Vagina (tissue), 2 donors: ENCODE measurements at regions of chr5 and their contacts with region 1.

Region 1: DNA sequence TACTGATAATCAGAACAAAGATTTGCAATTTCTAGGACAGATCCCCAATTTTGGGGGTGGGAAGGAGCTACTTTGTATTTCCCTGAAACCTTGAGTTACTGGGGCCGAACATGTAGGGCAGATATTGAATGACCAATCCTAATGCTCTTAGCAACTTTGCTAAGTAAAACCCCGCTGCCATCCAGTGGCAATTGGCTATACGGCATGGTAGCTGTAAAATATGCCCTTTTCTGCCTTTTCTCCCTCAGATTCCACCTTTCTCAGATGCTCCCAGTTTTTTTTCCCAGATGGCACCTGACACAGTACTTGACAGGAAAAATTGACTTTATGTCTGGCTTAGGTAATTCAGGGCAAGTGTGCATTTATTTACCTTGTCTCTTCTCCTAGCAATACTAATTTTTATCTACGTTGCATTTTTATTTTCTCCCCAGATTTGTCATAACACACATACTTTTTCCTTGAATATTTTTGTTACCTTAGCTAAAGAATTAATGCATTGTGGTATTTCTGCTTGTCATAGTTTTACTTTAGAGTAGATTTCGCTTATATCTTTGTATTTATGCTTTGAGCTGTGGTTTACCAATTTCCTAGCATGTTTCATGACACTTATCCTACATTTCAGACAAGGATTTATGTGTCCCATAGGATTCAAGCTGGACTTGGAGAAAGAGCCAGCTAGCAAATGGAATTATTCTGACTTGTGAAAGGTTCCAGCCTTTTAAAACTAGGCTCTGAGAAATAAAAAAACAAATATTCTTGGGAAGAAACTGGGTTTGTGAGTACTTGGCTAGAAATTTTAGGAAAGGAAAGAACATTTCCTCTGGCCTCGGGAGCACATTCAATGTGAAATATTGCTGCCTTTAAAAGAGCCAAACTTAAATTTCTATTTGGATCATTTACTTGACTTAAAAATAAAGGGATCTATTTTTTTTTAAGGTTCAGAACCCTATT is 37.4 kb downstream of the PIK3R1 start:
- DNase-seq: no peak
- H3K4me3 ChIP-seq: peak overlapping the region; percentile 1 to 9
- H3K27ac ChIP-seq: peak overlapping the region; percentile 72
- H3K4me1 ChIP-seq: peaks cover 99% of the 10 kb centered on the region
- H3K27me3 ChIP-seq: no peaks in the 10 kb centered on the region
- CTCF ChIP-seq: peak in 2 of 3 experiments; percentile 39 to 64
- POLR2A ChIP-seq: no peak

Region 2: DNA sequence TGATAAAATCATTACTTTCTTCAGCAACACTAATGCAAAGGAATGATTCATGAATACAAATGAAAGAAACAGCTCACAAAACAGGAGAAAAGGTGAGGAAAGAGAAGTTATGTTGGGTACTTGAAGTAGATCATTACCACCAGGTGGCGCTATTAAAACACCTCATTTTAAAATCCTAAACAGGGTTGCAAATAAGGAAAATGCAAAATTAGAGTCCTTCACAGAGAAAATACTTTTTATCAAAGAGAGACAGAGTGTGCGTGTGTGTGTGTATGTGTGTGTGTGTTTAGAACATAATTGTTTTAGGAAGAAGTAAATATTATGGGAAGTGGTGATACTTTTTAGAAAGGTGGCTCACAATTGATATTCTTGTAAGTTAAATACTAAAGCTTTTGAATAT is 1006.8 kb before region 1 on chr5:
- intact Hi-C with region 1: loop called (anchors 10 kb)
- DNase-seq: no peak
- H3K4me3 ChIP-seq: no peak overlapping the region
- H3K27ac ChIP-seq: peak overlapping the region; percentile 48
- H3K4me1 ChIP-seq: peaks cover 61% of the 10 kb centered on the region
- H3K27me3 ChIP-seq: no peaks in the 10 kb centered on the region
- CTCF ChIP-seq: peak; percentile 38 to 89 (median 78)
- POLR2A ChIP-seq: no peak

Region 3: GRCh38 chr5:67648201-67648671 is 604.7 kb before region 1 on chr5:
- intact Hi-C with region 1: loop called (anchors 10 kb)
- DNase-seq: peak in 1 of 2 donors; percentile 94
- H3K4me3 ChIP-seq: no peak overlapping the region
- H3K27ac ChIP-seq: peak overlapping the region; percentile 48
- H3K4me1 ChIP-seq: peaks cover 28% of the 10 kb centered on the region
- H3K27me3 ChIP-seq: no peaks in the 10 kb centered on the region
- CTCF ChIP-seq: no peak
- POLR2A ChIP-seq: no peak

Region 4: GRCh38 chr5:68215208-68215897 is 37.6 kb before region 1 on chr5 and contains the start of gene PIK3R1:
- intact Hi-C with region 1: loop called (anchors 5 kb)
- DNase-seq: peak in 1 of 2 donors; percentile 97
- H3K4me3 ChIP-seq: peak within 1 kb of the TSS; percentile 71 to 98
- H3K27ac ChIP-seq: peak within 1 kb of the TSS; percentile 85
- H3K4me1 ChIP-seq: peaks cover 30% of the 10 kb centered on the region
- H3K27me3 ChIP-seq: no peaks in the 10 kb centered on the region
- CTCF ChIP-seq: peak in 1 of 3 experiments; percentile 38
- POLR2A ChIP-seq: peak; percentile 89 to 92
- total RNA-seq, gene PIK3R1: 134 TPM

Region 5: GRCh38 chr5:68303038-68303738 is 50.2 kb after region 1 on chr5:
- intact Hi-C with region 1: no loop called
- DNase-seq: peak in 1 of 2 donors; percentile 29
- H3K4me3 ChIP-seq: no peak overlapping the region
- H3K27ac ChIP-seq: no peak overlapping the region
- H3K4me1 ChIP-seq: no peaks in the 10 kb centered on the region
- H3K27me3 ChIP-seq: no peaks in the 10 kb centered on the region
- CTCF ChIP-seq: no peak
- POLR2A ChIP-seq: no peak